Transverse colon (tissue), 4 donors: ENCODE measurements at regions of chr17 and their contacts with region 1.

Region 1: GRCh38 chr17:29111816-29112499 is 68.2 kb downstream of the MYO18A start:
- DNase-seq: peak; percentile 68
- H3K4me3 ChIP-seq: no peak overlapping the region
- H3K27ac ChIP-seq: no peak overlapping the region
- H3K4me1 ChIP-seq: no peaks in the 10 kb centered on the region
- H3K27me3 ChIP-seq: no peaks in the 10 kb centered on the region
- CTCF ChIP-seq: peak; percentile 70 to 89 (median 79)
- EP300 ChIP-seq: no peak
- POLR2A ChIP-seq: no peak

Region 2: GRCh38 chr17:28967221-28968140 is 144.5 kb before region 1 on chr17:
- in situ Hi-C with region 1: loop called in 3 of 4 experiments (anchors 5 to 10 kb)
- intact Hi-C with region 1: loop called (anchors 2 kb)
- DNase-seq: no peak
- H3K4me3 ChIP-seq: no peak overlapping the region
- H3K27ac ChIP-seq: no peak overlapping the region
- H3K4me1 ChIP-seq: no peaks in the 10 kb centered on the region
- H3K27me3 ChIP-seq: peaks cover 10% of the 10 kb centered on the region
- CTCF ChIP-seq: no peak
- EP300 ChIP-seq: no peak
- POLR2A ChIP-seq: no peak